ENCODE measurements at regions of chr11 and their contacts with region 1.

Region 1: DNA sequence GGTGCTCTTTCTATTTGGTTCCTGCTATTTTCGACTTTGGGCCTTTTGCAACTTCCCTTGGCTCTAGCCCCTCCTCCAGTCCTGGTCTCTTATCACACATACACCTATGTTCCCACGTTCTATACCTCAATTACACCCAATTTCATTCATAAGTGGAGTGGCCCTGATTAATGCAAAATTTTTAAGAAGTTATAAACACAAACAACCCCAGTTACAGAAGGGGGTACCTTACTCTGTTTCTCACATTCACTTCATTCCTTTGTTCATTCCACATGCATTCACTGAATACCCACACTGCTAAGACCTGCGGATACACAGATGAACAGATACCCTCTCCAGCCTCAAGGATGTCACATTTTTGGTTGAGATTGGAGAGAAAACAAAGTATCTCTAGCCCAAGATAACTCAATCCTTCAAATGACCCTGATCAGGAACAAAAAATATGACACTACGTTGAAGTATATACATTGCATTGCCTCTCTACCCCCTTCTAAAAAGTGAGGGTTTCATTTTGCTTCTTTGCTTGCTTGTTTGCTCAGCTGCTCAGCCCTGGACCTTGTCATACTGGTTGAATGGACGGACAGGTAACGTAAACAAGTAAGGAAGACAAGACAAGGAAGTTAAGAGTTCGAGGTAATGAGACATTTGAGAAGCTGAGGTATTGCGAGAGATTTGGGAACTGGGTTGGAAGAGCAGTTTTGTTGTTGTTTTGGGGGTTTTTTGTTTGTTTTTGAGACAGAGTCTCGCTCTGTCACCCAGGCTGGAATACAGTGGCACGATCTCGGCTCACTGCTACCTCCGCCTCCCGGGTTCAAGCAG is 3.6 kb upstream of the VPS37C start:
- DNase-seq: no peak
- ATAC-seq: no peak
- H3K4me3 ChIP-seq: no peak overlapping the region
- H3K27ac ChIP-seq: peak overlapping the region in 1 of 4 donors; percentile 48
- H3K4me1 ChIP-seq: peaks cover 30% of the 10 kb centered on the region
- H3K27me3 ChIP-seq: no peaks in the 10 kb centered on the region
- CTCF ChIP-seq: no peak
- POLR2A ChIP-seq: no peak

Region 2: DNA sequence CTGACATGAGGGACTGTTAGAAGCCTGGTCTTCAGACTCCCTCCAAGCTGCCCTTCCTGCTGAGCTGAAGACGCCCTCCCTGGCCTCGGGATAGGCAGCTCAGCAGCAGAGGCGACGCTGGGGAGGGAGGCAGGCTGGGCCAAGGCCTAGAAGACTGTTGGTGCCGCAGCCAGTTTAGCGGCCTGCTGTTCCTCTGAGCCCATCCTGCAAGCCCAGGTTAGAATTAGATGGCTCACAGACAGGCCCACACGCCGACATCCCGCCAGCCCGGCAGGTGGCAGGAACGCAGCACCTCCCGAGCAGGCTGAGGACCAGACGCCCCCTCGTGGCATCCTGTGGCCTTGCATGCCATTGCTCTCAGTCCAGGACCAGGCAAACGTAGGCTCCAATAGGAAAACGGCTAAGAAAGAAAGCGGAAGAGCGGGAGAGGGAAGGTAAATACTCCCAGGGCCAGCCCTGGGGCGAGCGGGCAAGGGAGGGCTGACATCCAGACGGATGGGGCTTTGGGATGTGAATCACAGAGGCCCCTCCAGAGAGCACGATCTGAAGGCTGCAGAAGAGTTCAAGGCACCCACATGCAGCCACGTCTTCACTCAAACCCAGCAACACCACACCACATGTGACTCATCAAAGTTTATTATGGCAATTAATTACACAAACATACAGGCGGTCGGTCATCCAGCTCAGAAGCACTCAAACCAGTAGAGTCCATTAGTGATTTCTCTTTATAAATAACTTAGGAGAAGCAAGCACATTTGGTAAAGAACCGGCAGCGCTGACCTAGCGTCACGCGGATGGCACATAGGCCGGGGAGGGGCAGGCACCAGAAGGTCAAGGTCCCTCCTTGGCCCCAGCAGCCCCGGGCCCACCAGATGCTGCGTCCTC is 34.9 kb before region 1 on chr11:
- intact Hi-C with region 1: loop called (anchors 5 kb)
- DNase-seq: peak; percentile 90 to 92 (median 92)
- ATAC-seq: peak; percentile 93
- H3K4me3 ChIP-seq: no peak overlapping the region
- H3K27ac ChIP-seq: peak overlapping the region in 3 of 4 donors; percentile 29 to 67 (median 64)
- H3K4me1 ChIP-seq: peaks cover 16% of the 10 kb centered on the region
- H3K27me3 ChIP-seq: no peaks in the 10 kb centered on the region
- CTCF ChIP-seq: peak; percentile 97 to 100 (median 100)
- POLR2A ChIP-seq: no peak